Activated naive CD4-positive, alpha-beta T cell treated with anti-CD3 and anti-CD28 coated beads for 36 hours (primary cell): ENCODE measurements at regions of chr4 and their contacts with region 1.

Region 1: GRCh38 chr4:112031712-112032328 is 113.4 kb upstream of the FAM241A start:
- DNase-seq: peak; percentile 13
- H3K4me3 Mint-ChIP-seq: no peak overlapping the region
- H3K27ac Mint-ChIP-seq: no peak overlapping the region
- H3K4me1 Mint-ChIP-seq: no peaks in the 10 kb centered on the region
- H3K27me3 Mint-ChIP-seq: peaks cover 16% of the 10 kb centered on the region

Region 2: DNA sequence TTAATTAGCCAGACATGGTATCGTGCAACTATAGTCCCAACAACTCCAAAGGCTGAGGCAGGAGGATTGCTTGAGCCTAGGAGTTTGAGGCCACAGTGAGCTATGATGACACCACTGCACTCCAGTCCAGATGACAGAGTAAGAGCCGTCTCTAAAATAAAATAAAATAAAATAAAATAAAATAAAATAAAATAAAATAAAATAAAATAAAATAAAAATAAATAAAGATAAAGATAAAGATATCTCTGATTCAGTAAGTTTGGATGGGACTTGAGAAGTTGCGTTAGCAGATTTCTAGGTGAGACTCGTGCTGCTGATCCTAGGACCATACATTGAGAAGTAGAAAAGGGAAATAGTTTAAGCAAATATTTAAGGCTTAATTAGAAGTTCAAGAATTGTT is 141.4 kb before region 1 on chr4:
- CTCF ChIA-PET with region 1: no interaction called
- intact Hi-C with region 1: no loop called
- DNase-seq: no peak
- H3K4me3 Mint-ChIP-seq: no peak overlapping the region
- H3K27ac Mint-ChIP-seq: no peak overlapping the region
- H3K4me1 Mint-ChIP-seq: no peaks in the 10 kb centered on the region
- H3K27me3 Mint-ChIP-seq: no peaks in the 10 kb centered on the region

Region 3: GRCh38 chr4:111943795-111944203 is 88.0 kb before region 1 on chr4:
- CTCF ChIA-PET with region 1: no interaction called
- intact Hi-C with region 1: loop called (anchors 5 kb)
- DNase-seq: peak; percentile 10
- H3K4me3 Mint-ChIP-seq: no peak overlapping the region
- H3K27ac Mint-ChIP-seq: no peak overlapping the region
- H3K4me1 Mint-ChIP-seq: no peaks in the 10 kb centered on the region
- H3K27me3 Mint-ChIP-seq: no peaks in the 10 kb centered on the region